ENCODE measurements at regions of chr5 and their contacts with region 1.

Region 1: DNA sequence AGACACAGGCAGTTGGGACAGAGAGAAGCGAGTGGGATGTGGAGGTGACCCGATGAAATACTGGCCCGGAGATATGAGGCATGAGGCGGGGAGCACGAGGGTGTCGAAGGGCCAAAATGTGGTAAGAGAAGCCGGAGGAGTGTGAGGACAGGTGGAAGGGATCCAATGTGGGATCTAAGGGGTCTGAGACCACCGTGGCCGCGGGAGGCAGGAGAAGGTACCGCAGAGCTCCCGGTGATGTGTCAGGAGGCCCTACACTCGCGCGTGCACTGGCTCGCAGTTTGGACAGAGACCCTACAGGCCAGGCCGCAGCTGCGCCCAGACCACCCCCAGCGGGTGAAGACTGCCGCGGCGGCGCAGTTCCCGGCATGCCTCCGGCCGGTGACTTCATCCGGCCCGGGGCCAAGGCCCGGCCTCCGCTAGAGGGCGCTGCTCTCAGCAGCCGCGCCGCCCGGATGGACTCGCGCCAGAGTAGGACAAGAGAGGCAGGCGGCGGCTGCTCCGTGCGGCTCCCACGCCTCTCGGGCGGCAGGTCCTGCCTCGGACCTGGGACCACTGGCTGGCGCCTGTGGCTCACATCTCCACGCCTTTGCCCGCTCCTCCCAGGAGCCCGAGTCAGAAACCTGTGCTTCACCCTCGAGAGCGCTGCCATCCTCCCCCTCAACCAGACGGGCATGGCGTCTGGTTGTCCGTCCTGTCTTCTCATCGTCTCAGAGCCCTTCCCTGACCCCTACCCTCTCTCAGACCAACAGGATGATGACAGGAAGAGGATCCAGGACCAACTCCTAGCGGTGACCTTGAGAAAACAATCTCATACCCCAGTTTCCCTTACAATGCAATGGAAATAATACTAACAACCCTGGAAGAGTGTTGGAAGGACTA is 35.4 kb upstream of the STING1 start:
- DNase-seq: peak; percentile 93
- ATAC-seq: peak; percentile 93
- H3K4me3 Mint-ChIP-seq: peak overlapping the region; percentile 84
- H3K27ac Mint-ChIP-seq: peak overlapping the region; percentile 89
- H3K4me1 Mint-ChIP-seq: peaks cover 19% of the 10 kb centered on the region
- H3K27me3 Mint-ChIP-seq: no peaks in the 10 kb centered on the region
- CTCF ChIP-seq: peak; percentile 57

Region 2: DNA sequence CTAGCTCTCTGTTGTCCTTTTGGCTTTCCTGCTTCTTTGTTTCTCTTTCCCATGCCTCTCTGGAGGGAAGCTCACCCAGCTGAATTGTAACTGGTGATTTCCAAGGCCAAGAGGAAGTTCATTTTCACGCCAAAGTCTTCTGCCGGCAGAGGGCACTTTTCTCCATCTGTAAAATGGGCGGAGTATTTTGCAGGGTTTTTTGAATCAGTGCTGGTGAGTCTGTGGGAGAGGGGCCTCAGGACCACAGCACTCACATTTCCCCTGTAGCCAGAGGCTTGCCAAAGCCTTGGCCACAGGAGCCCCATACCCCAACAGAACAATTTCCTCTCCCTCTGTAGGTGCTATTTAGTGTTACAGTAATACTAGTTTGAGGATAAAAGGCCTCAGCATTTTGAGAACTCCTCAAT is 266.6 kb before region 1 on chr5:
- CTCF ChIA-PET with region 1: interaction called, 4 read pairs
- POLR2A ChIA-PET with region 1: no interaction called
- intact Hi-C with region 1: loop called (anchors 1 kb)
- DNase-seq: no peak
- ATAC-seq: peak; percentile 50
- H3K4me3 Mint-ChIP-seq: no peak overlapping the region
- H3K27ac Mint-ChIP-seq: no peak overlapping the region
- H3K4me1 Mint-ChIP-seq: peaks cover 5% of the 10 kb centered on the region
- H3K27me3 Mint-ChIP-seq: no peaks in the 10 kb centered on the region
- CTCF ChIP-seq: no peak

Region 3: GRCh38 chr5:139341650-139342422 is 176.1 kb before region 1 on chr5 and contains the start of gene PAIP2:
- CTCF ChIA-PET with region 1: no interaction called
- POLR2A ChIA-PET with region 1: no interaction called
- intact Hi-C with region 1: loop called (anchors 2 kb)
- DNase-seq: peak; percentile 95
- ATAC-seq: peak; percentile 87
- H3K4me3 Mint-ChIP-seq: peak within 1 kb of the TSS; percentile 96
- H3K27ac Mint-ChIP-seq: peak within 1 kb of the TSS; percentile 95
- H3K4me1 Mint-ChIP-seq: peaks cover 52% of the 10 kb centered on the region
- H3K27me3 Mint-ChIP-seq: no peaks in the 10 kb centered on the region
- CTCF ChIP-seq: no peak
- total RNA-seq, gene PAIP2: 79.7 and 80.8 TPM in 2 replicates

Region 4: DNA sequence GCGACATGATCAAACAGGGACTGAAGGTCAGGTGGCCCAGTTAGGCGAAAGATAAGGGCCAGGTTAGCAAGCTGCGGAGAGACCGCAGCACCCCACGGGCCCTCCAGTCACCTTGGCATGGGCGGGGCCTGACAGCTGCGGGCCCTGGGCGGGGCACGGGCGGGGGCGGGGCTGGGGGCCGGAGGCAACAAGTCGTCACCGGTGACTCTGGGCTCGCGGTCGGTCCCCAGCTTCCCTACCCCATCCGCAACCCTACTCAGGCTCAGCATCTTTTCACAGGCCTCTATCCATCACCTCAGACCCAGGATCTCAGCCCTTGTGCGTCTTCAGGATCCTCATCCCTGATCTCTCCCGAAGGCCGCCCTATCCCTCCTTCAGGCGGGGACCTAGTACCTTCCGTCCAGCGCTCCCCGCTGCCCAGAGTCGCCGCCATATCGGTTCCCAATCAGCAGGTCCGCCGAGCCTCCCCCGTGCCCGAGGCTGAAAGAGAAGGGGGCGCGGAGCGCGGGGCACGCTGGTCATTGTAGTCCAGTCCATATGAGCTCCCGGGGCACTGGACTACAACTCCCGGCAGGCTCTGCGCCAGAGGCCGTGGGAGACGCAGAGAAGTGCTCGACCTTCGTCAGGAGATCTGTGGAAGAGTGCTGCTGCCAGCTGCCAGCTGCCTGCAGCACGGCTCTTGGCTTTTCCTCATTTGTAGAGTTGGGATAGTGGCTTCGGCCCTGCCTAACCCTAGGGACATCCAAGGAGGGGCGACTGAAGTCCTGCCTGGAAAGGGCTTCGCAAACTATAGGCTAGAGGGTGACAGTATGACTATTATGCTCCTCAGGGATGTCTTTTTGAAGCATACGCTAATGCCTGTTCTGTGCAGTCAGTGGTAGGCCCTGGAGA is 78.7 kb before region 1 on chr5 and contains the start of gene DNAJC18:
- CTCF ChIA-PET with region 1: interaction called, 3 read pairs
- POLR2A ChIA-PET with region 1: interaction called, 3 read pairs
- intact Hi-C with region 1: loop called (anchors 1 kb)
- DNase-seq: peak; percentile 87
- ATAC-seq: peak; percentile 95
- H3K4me3 Mint-ChIP-seq: peak within 1 kb of the TSS; percentile 99
- H3K27ac Mint-ChIP-seq: peak within 1 kb of the TSS; percentile 99
- H3K4me1 Mint-ChIP-seq: peaks cover 12% of the 10 kb centered on the region
- H3K27me3 Mint-ChIP-seq: no peaks in the 10 kb centered on the region
- CTCF ChIP-seq: no peak
- total RNA-seq, gene DNAJC18: 9.1 and 9.6 TPM in 2 replicates

Region 5: DNA sequence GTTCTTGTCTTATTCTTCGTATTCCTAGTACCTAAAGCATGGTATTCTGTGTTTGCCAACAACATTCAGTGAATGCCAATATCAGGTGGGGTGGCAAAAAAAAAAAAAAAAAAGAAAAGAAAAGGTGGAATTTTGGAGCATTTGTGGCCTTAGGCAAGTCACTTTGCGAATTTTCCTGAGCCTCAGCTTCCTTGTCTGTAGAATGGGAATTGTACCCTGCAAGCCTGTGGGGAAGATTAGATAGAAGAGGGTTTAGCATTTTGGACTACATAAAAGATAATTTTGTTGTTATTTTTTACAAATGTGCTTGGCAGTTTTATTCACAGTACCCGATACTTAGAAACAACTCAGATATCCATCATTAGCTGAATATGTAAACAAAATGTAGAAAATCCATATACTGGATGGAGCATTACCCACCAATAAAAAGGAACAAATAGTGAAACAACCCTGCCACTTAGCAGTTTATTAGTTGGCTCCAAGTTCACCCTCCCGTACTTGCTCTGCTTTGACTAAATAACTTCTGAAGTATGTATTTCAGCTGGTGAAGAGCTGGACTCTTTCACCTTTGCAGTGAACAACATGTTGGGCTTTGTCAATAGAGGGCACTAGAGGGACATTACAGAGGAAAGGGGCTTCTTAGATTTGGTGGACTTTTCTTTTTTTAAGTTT is 56.9 kb after region 1 on chr5:
- CTCF ChIA-PET with region 1: interaction called, 4 read pairs
- POLR2A ChIA-PET with region 1: interaction called, 6 read pairs
- intact Hi-C with region 1: loop called (anchors 1 kb)
- DNase-seq: no peak
- ATAC-seq: peak; percentile 70
- H3K4me3 Mint-ChIP-seq: no peak overlapping the region
- H3K27ac Mint-ChIP-seq: peak overlapping the region; percentile 42
- H3K4me1 Mint-ChIP-seq: peaks cover 81% of the 10 kb centered on the region
- H3K27me3 Mint-ChIP-seq: no peaks in the 10 kb centered on the region
- CTCF ChIP-seq: peak; percentile 28

Region 6: DNA sequence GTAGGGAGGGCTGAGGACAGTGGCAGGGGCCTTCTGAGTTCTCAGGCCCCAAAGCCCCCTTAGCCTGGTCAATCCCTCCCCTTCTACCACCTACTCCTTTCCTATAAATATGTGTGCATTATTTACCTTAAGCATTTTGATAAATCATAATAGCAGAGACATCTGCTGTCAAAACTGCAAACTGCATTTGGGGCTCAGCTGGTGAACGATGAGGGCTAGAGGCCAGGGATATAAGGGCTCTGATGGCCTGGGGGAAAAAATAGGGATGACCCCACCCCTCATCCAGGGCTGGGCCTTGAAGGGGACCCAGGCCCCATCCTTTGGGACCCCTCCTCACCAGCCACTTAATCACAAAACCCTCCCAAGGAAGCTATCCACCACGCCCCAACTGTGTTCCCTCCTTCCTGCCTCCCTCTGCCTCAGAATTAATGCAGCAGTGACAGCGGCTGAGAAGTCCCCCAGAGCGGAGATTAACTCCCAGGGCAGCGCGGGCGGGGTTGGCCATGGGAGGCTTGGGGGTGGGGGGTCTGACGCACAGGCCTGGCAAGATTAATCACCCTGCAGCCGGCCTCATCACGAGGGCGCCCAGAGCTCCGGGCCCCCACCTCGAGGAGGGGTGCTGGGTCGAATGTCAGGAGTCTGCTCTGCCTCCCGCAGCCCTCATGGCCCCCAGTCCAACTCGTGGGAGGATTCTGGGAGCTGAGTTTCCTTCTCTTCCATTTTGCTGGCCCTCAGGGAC is 172.3 kb after region 1 on chr5:
- CTCF ChIA-PET with region 1: no interaction called
- POLR2A ChIA-PET with region 1: no interaction called
- intact Hi-C with region 1: loop called (anchors 2 kb)
- DNase-seq: no peak
- ATAC-seq: peak; percentile 56
- H3K4me3 Mint-ChIP-seq: no peak overlapping the region
- H3K27ac Mint-ChIP-seq: peak overlapping the region; percentile 67
- H3K4me1 Mint-ChIP-seq: peaks cover 53% of the 10 kb centered on the region
- H3K27me3 Mint-ChIP-seq: no peaks in the 10 kb centered on the region
- CTCF ChIP-seq: peak; percentile 19

Region 7: GRCh38 chr5:139844472-139845145 is 326.7 kb after region 1 on chr5:
- CTCF ChIA-PET with region 1: no interaction called
- POLR2A ChIA-PET with region 1: interaction called, 4 read pairs
- intact Hi-C with region 1: loop called (anchors 10 kb)
- DNase-seq: peak; percentile 57
- ATAC-seq: peak; percentile 40
- H3K4me3 Mint-ChIP-seq: peak overlapping the region; percentile 5
- H3K27ac Mint-ChIP-seq: no peak overlapping the region
- H3K4me1 Mint-ChIP-seq: peaks cover 16% of the 10 kb centered on the region
- H3K27me3 Mint-ChIP-seq: peaks cover 13% of the 10 kb centered on the region
- CTCF ChIP-seq: peak; percentile 61